Activated CD4-positive, alpha-beta T cell treated with anti-CD3 and anti-CD28 coated beads for 36 hours (primary cell): ENCODE measurements at regions of chr19 and their contacts with region 1.

Region 1: GRCh38 chr19:10269333-10270179 is 1.4 kb upstream of the ICAM1 start:
- DNase-seq: peak; percentile 94
- ATAC-seq: peak; percentile 62
- H3K4me3 Mint-ChIP-seq: peak overlapping the region; percentile 80
- H3K27ac Mint-ChIP-seq: peak overlapping the region; percentile 91
- H3K4me1 Mint-ChIP-seq: peaks cover 35% of the 10 kb centered on the region
- H3K27me3 Mint-ChIP-seq: no peaks in the 10 kb centered on the region

Region 2: DNA sequence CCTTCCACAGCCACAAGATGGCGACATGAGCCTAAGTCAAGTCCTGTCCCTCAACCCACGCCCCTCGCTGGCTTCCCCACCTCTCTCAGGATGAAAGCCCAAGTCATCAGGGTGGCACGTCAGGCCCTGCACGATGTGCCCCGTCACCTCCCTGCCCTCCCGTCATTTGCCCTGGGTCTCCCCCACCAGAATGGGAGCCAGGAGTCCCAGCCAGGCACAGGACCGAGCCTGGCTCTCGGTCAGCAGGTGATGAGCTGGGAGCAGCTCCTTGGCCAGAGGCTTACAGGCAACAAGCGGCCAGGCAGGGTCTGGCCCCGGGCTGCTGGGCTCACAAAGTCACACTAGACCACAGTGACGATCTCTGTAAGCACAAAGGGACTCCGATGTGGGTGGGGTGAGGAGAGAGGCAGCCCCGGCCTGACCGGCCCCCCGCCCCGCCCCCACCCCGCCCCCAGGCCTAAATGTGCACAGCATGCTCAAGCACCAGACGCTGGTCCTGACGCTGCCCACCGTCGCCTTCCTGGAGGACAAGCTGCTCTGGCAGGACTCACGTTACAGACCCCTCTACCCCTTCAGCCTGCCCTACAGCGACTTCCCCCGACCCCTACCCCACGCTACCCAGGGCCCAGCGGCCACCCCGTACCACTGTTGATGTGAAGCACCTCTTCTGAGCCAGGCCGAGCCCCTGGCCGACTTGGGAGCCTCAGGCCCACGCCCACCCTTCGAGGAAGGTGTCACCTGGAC is 10.2 kb before region 1 on chr19:
- CTCF ChIA-PET with region 1: interaction called, 82 read pairs
- POLR2A ChIA-PET with region 1: interaction called, 53 read pairs
- intact Hi-C with region 1: no loop called
- DNase-seq: peak; percentile 99
- ATAC-seq: peak; percentile 73
- H3K4me3 Mint-ChIP-seq: peak overlapping the region; percentile 53
- H3K27ac Mint-ChIP-seq: peak overlapping the region; percentile 90
- H3K4me1 Mint-ChIP-seq: peaks cover 26% of the 10 kb centered on the region
- H3K27me3 Mint-ChIP-seq: no peaks in the 10 kb centered on the region

Region 3: DNA sequence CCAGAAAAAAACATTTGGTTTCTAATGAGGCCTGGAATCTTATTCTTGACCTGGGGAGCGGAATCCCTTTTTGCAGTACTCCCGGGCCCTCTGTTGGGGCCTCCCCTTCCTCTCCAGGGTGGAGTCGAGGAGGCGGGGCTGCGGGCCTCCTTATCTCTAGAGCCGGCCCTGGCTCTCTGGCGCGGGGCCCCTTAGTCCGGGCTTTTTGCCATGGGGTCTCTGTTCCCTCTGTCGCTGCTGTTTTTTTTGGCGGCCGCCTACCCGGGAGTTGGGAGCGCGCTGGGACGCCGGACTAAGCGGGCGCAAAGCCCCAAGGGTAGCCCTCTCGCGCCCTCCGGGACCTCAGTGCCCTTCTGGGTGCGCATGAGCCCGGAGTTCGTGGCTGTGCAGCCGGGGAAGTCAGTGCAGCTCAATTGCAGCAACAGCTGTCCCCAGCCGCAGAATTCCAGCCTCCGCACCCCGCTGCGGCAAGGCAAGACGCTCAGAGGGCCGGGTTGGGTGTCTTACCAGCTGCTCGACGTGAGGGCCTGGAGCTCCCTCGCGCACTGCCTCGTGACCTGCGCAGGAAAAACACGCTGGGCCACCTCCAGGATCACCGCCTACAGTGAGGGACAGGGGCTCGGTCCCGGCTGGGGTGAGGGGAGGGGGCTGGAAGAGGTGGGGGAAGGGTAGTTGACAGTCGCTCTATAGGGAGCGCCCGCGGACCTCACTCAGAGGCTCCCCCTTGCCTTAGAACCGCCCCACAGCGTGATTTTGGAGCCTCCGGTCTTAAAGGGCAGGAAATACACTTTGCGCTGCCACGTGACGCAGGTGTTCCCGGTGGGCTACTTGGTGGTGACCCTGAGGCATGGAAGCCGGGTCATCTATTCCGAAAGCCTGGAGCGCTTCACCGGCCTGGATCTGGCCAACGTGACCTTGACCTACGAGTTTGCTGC is 17.5 kb after region 1 on chr19 and contains the start of gene ICAM4:
- CTCF ChIA-PET with region 1: interaction called, 15 read pairs
- POLR2A ChIA-PET with region 1: interaction called, 18 read pairs
- intact Hi-C with region 1: loop called (anchors 1 to 2 kb)
- DNase-seq: peak; percentile 68
- ATAC-seq: peak; percentile 31
- H3K4me3 Mint-ChIP-seq: no peak within 1 kb of the TSS
- H3K27ac Mint-ChIP-seq: no peak within 1 kb of the TSS
- H3K4me1 Mint-ChIP-seq: peaks cover 58% of the 10 kb centered on the region
- H3K27me3 Mint-ChIP-seq: peaks cover 39% of the 10 kb centered on the region
- total RNA-seq, gene ICAM4: 0.23 to 0.46 TPM

Region 4: GRCh38 chr19:10299545-10300458 is 30.2 kb after region 1 on chr19:
- CTCF ChIA-PET with region 1: interaction called, 5 read pairs
- POLR2A ChIA-PET with region 1: no interaction called
- intact Hi-C with region 1: loop called in 1 of 2 experiments (anchors 5 kb)
- DNase-seq: no peak
- ATAC-seq: no peak
- H3K4me3 Mint-ChIP-seq: no peak overlapping the region
- H3K27ac Mint-ChIP-seq: no peak overlapping the region
- H3K4me1 Mint-ChIP-seq: peaks cover 12% of the 10 kb centered on the region
- H3K27me3 Mint-ChIP-seq: peaks cover 12% of the 10 kb centered on the region

Region 5: GRCh38 chr19:10380313-10381102 is 111.0 kb after region 1 on chr19 and contains the start of gene TYK2:
- CTCF ChIA-PET with region 1: interaction called, 165 read pairs
- POLR2A ChIA-PET with region 1: interaction called, 9 read pairs
- intact Hi-C with region 1: loop called (anchors 2 kb)
- DNase-seq: peak; percentile 97
- ATAC-seq: peak; percentile 99
- H3K4me3 Mint-ChIP-seq: peak within 1 kb of the TSS; percentile 86
- H3K27ac Mint-ChIP-seq: peak within 1 kb of the TSS; percentile 96
- H3K4me1 Mint-ChIP-seq: peaks cover 22% of the 10 kb centered on the region
- H3K27me3 Mint-ChIP-seq: no peaks in the 10 kb centered on the region
- total RNA-seq, gene TYK2: 151 to 197 TPM

Region 6: GRCh38 chr19:10580979-10581631 is 311.5 kb after region 1 on chr19:
- CTCF ChIA-PET with region 1: no interaction called
- POLR2A ChIA-PET with region 1: no interaction called
- intact Hi-C with region 1: no loop called
- DNase-seq: peak; percentile 95
- ATAC-seq: peak; percentile 98
- H3K4me3 Mint-ChIP-seq: no peak overlapping the region
- H3K27ac Mint-ChIP-seq: no peak overlapping the region
- H3K4me1 Mint-ChIP-seq: peaks cover 17% of the 10 kb centered on the region
- H3K27me3 Mint-ChIP-seq: no peaks in the 10 kb centered on the region